SK-N-SH (cell line): ENCODE measurements at regions of chr11 and their contacts with region 1.

Region 1: DNA sequence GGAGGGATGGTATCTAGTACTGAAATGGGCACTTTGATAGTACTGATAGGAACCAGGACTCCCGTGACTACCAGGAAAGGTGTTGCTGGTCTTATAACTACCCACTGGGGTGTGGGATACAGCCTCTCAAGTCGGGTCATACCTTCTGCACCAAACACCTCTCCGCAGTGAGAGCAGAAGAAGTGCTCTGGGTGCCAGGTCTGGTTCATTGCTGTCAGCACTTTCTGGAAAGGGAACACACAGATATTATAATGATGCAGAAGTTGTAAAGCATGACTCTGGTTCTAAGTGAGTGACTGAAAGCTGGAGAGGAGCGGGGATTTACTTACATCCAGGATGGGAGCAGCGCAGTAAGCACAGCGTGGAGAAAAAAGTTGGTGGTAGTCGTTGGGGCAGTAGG is 26.0 kb downstream of the LPXN start:
- DNase-seq: no peak
- H3K4me3 ChIP-seq: no peak overlapping the region
- H3K27ac ChIP-seq: no peak overlapping the region
- H3K4me1 ChIP-seq: no peaks in the 10 kb centered on the region
- H3K27me3 ChIP-seq: no peaks in the 10 kb centered on the region
- CTCF ChIP-seq: no peak
- EP300 ChIP-seq: no peak
- RAD21 ChIP-seq: no peak

Region 2: DNA sequence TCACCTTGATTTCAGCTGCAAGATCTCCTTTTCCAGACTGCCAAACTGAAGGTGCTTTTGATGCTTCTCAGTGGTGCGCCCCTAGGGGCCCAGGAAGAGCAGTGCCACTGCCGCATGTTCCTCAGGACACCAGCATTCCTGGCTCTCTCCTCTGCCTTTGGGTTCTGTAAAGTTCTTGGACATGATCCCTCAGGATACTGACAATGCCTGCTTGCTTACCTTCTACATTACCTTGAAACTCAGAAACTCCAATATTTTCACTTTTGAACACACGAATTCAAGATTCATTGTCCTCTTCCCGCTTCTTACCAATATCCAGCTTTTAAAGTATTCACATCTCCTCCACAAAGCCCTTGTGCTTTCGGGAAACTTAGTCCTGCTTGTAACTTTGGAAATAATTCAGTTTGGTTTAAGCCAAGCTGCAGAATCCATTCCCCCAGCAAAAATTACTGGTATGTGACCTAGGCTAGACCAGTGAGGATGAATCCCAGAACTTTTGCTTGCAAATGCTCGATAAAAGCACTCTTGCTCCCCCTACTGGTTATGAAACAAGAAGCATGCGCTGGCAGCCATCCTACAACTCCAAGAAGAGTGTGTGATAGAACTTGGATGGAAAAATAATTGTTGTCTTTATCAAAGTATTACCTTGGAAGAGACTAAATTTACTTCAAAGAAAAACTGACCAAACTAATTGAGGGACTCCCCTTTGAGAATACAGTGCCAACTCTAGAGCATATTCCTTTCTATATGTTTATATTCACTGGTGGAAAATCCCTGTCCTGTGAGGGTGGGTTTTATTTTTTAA is 25.2 kb before region 1 on chr11:
- CTCF ChIA-PET with region 1: interaction called, 13 read pairs
- POLR2A ChIA-PET with region 1: no interaction called
- DNase-seq: peak; percentile 61
- H3K4me3 ChIP-seq: peak overlapping the region in 1 of 2 experiments; percentile 13; a peak in 1 of 4 replicates
- H3K27ac ChIP-seq: no peak overlapping the region
- H3K4me1 ChIP-seq: no peaks in the 10 kb centered on the region
- H3K27me3 ChIP-seq: no peaks in the 10 kb centered on the region; the same call in 1 of the 2 replicates
- CTCF ChIP-seq: peak; percentile 79
- EP300 ChIP-seq: no peak
- RAD21 ChIP-seq: peak; percentile 66

Region 3: GRCh38 chr11:58567889-58568512 is 18.4 kb after region 1 on chr11:
- CTCF ChIA-PET with region 1: interaction called, 23 read pairs
- POLR2A ChIA-PET with region 1: no interaction called
- DNase-seq: peak; percentile 52
- H3K4me3 ChIP-seq: no peak overlapping the region
- H3K27ac ChIP-seq: no peak overlapping the region
- H3K4me1 ChIP-seq: peaks cover 0 to 4% of the 10 kb centered on the region in 2 experiments; a peak in 1 of 4 replicates
- H3K27me3 ChIP-seq: no peaks in the 10 kb centered on the region
- CTCF ChIP-seq: peak; percentile 80
- EP300 ChIP-seq: no peak
- RAD21 ChIP-seq: peak; percentile 45